Endothelial cell of umbilical vein (primary cell): ENCODE measurements at regions of chr15 and their contacts with region 1.

Region 1: GRCh38 chr15:70806992-70807712 is 43.8 kb upstream of the UACA start:
- DNase-seq: peak; percentile 82
- H3K4me3 ChIP-seq: no peak overlapping the region
- H3K27ac ChIP-seq: peak overlapping the region; percentile 76
- H3K4me1 ChIP-seq: peaks cover 30% of the 10 kb centered on the region
- H3K27me3 ChIP-seq: no peaks in the 10 kb centered on the region
- CTCF ChIP-seq: no peak
- POLR2A ChIP-seq: no peak

Region 2: GRCh38 chr15:70690491-70691257 is 116.5 kb before region 1 on chr15:
- CTCF ChIA-PET with region 1: interaction called, 22 read pairs
- POLR2A ChIA-PET with region 1: no interaction called
- dilution Hi-C with region 1: no loop called
- intact Hi-C with region 1: no loop called
- DNase-seq: peak; percentile 82
- H3K4me3 ChIP-seq: peak overlapping the region in 1 of 3 experiments; percentile 38
- H3K27ac ChIP-seq: peak overlapping the region; percentile 67
- H3K4me1 ChIP-seq: peaks cover 45% of the 10 kb centered on the region
- H3K27me3 ChIP-seq: no peaks in the 10 kb centered on the region
- CTCF ChIP-seq: no peak
- POLR2A ChIP-seq: no peak

Region 3: GRCh38 chr15:70722266-70723121 is 84.7 kb before region 1 on chr15:
- CTCF ChIA-PET with region 1: interaction called, 197 read pairs
- POLR2A ChIA-PET with region 1: no interaction called
- dilution Hi-C with region 1: no loop called
- intact Hi-C with region 1: no loop called
- DNase-seq: peak; percentile 62
- H3K4me3 ChIP-seq: no peak overlapping the region
- H3K27ac ChIP-seq: peak overlapping the region; percentile 36
- H3K4me1 ChIP-seq: peaks cover 30% of the 10 kb centered on the region
- H3K27me3 ChIP-seq: no peaks in the 10 kb centered on the region
- CTCF ChIP-seq: peak; percentile 44
- POLR2A ChIP-seq: no peak

Region 4: GRCh38 chr15:70754862-70755261 is 52.3 kb before region 1 on chr15:
- CTCF ChIA-PET with region 1: interaction called, 39 read pairs
- POLR2A ChIA-PET with region 1: no interaction called
- dilution Hi-C with region 1: no loop called
- intact Hi-C with region 1: no loop called
- DNase-seq: no peak
- H3K4me3 ChIP-seq: no peak overlapping the region
- H3K27ac ChIP-seq: no peak overlapping the region
- H3K4me1 ChIP-seq: peaks cover 16% of the 10 kb centered on the region
- H3K27me3 ChIP-seq: no peaks in the 10 kb centered on the region
- CTCF ChIP-seq: no peak
- POLR2A ChIP-seq: no peak

Region 5: GRCh38 chr15:70778258-70779076 is 28.7 kb before region 1 on chr15:
- CTCF ChIA-PET with region 1: interaction called, 13 read pairs
- POLR2A ChIA-PET with region 1: no interaction called
- dilution Hi-C with region 1: no loop called
- intact Hi-C with region 1: no loop called
- DNase-seq: peak; percentile 45
- H3K4me3 ChIP-seq: no peak overlapping the region
- H3K27ac ChIP-seq: peak overlapping the region; percentile 68
- H3K4me1 ChIP-seq: peaks cover 36% of the 10 kb centered on the region
- H3K27me3 ChIP-seq: no peaks in the 10 kb centered on the region
- CTCF ChIP-seq: no peak
- POLR2A ChIP-seq: no peak

Region 6: GRCh38 chr15:70845602-70846360 is 38.6 kb after region 1 on chr15:
- CTCF ChIA-PET with region 1: interaction called, 13 read pairs
- POLR2A ChIA-PET with region 1: interaction called, 3 read pairs
- dilution Hi-C with region 1: no loop called
- intact Hi-C with region 1: no loop called
- DNase-seq: no peak
- H3K4me3 ChIP-seq: no peak overlapping the region
- H3K27ac ChIP-seq: no peak overlapping the region
- H3K4me1 ChIP-seq: no peaks in the 10 kb centered on the region
- H3K27me3 ChIP-seq: no peaks in the 10 kb centered on the region
- CTCF ChIP-seq: no peak
- POLR2A ChIP-seq: no peak